ENCODE measurements at regions of chr11 and their contacts with region 1.

Region 1: GRCh38 chr11:110429731-110430266 is at the start of gene FDX1:
- DNase-seq: peak; percentile 91
- ATAC-seq: peak; percentile 87
- H3K4me3 ChIP-seq: peak within 1 kb of the TSS; percentile 74 to 91 (median 80)
- H3K4me3 Mint-ChIP-seq: peak within 1 kb of the TSS; percentile 98
- H3K27ac ChIP-seq: peak within 1 kb of the TSS; percentile 63 to 81
- H3K27ac Mint-ChIP-seq: peak within 1 kb of the TSS; percentile 95
- H3K4me1 ChIP-seq: peaks cover 22 to 28% of the 10 kb centered on the region in 2 donors
- H3K4me1 Mint-ChIP-seq: peaks cover 36% of the 10 kb centered on the region
- H3K27me3 ChIP-seq: no peaks in the 10 kb centered on the region
- H3K27me3 Mint-ChIP-seq: no peaks in the 10 kb centered on the region
- CTCF ChIP-seq: peak; percentile 71
- total RNA-seq, gene FDX1: 10.0 and 11.2 TPM in 2 replicates

Region 2: GRCh38 chr11:110296226-110297075 is 133.3 kb before region 1 on chr11 and contains the start of gene RDX:
- CTCF ChIA-PET with region 1: interaction called, 5 read pairs
- POLR2A ChIA-PET with region 1: no interaction called
- intact Hi-C with region 1: loop called (anchors 1 kb)
- DNase-seq: peak; percentile 83
- ATAC-seq: peak; percentile 84
- H3K4me3 ChIP-seq: peak within 1 kb of the TSS; percentile 50 to 93 (median 86)
- H3K4me3 Mint-ChIP-seq: peak within 1 kb of the TSS; percentile 94
- H3K27ac ChIP-seq: peak within 1 kb of the TSS; percentile 18 to 70
- H3K27ac Mint-ChIP-seq: peak within 1 kb of the TSS; percentile 80
- H3K4me1 ChIP-seq: peaks cover 8 to 12% of the 10 kb centered on the region in 2 donors
- H3K4me1 Mint-ChIP-seq: peaks cover 24% of the 10 kb centered on the region
- H3K27me3 ChIP-seq: peaks cover 0 to 3% (median 0%) of the 10 kb centered on the region in 4 experiments
- H3K27me3 Mint-ChIP-seq: no peaks in the 10 kb centered on the region
- CTCF ChIP-seq: no peak
- total RNA-seq, gene RDX: 34.8 and 39.2 TPM in 2 replicates

Region 3: GRCh38 chr11:110417727-110418126 is 12.1 kb before region 1 on chr11:
- CTCF ChIA-PET with region 1: interaction called, 14 read pairs
- POLR2A ChIA-PET with region 1: no interaction called
- intact Hi-C with region 1: no loop called
- DNase-seq: no peak
- ATAC-seq: no peak
- H3K4me3 ChIP-seq: no peak overlapping the region
- H3K4me3 Mint-ChIP-seq: no peak overlapping the region
- H3K27ac ChIP-seq: no peak overlapping the region
- H3K27ac Mint-ChIP-seq: no peak overlapping the region
- H3K4me1 ChIP-seq: no peaks in the 10 kb centered on the region
- H3K4me1 Mint-ChIP-seq: no peaks in the 10 kb centered on the region
- H3K27me3 ChIP-seq: peaks cover 0 to 6% (median 0%) of the 10 kb centered on the region in 4 experiments
- H3K27me3 Mint-ChIP-seq: peaks cover 9% of the 10 kb centered on the region
- CTCF ChIP-seq: no peak

Region 4: DNA sequence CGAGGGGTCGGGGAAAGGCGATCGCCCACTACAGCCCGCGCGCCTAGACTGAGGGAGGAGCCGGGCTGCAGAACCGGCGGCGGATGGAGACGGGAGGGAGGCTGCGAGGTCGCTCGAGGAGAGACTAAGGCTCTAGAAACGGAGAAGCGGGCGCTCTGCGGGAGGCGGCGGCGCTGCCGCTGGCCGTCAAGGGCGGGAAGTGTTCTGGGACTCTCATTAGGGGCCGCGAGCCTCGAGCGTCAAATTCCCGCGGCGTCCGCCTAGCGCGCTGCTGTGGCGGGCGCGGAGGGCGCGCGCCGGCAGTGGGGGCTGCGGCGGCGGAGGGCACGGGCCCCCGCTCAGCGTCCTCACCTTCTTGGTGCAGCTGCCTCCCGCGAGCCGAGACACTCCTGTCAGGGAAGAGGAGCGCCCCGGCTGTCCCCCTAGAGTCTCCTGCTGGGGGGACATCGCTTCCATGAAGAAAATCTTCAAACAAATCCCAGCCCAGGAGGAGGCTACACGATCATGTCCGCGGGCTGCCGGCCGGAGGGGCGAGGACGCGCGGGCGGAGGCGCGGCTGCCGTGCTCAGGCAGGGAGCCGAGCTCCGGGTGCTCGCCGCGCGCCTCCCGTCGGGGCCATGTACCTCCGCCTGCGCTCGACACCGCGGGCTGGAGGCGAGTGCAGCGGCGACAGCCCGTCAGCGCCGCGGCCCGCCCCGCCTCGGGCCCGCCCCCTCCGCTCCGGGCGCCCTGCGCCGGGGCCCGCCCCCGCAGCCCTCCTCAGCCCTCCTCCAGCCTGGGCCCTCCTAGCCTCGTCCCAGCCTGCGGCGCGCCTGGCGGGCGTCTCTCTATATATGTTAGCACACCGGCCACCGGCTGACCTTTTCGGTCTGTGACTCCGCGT is 282.2 kb after region 1 on chr11 and contains the start of gene ARHGAP20:
- CTCF ChIA-PET with region 1: no interaction called
- POLR2A ChIA-PET with region 1: no interaction called
- intact Hi-C with region 1: loop called (anchors 5 kb)
- DNase-seq: peak; percentile 79
- ATAC-seq: peak; percentile 93
- H3K4me3 ChIP-seq: peak within 1 kb of the TSS; percentile 26 to 86 (median 74)
- H3K4me3 Mint-ChIP-seq: peak within 1 kb of the TSS; percentile 89
- H3K27ac ChIP-seq: peak within 1 kb of the TSS in 1 of 2 donors; percentile 13
- H3K27ac Mint-ChIP-seq: peak within 1 kb of the TSS; percentile 54
- H3K4me1 ChIP-seq: peaks cover 17 to 23% of the 10 kb centered on the region in 2 donors
- H3K4me1 Mint-ChIP-seq: peaks cover 17% of the 10 kb centered on the region
- H3K27me3 ChIP-seq: peaks cover 0 to 41% (median 23%) of the 10 kb centered on the region in 4 experiments
- H3K27me3 Mint-ChIP-seq: peaks cover 47% of the 10 kb centered on the region
- CTCF ChIP-seq: no peak
- total RNA-seq, gene ARHGAP20: 0.58 and 0.91 TPM in 2 replicates

Region 5: DNA sequence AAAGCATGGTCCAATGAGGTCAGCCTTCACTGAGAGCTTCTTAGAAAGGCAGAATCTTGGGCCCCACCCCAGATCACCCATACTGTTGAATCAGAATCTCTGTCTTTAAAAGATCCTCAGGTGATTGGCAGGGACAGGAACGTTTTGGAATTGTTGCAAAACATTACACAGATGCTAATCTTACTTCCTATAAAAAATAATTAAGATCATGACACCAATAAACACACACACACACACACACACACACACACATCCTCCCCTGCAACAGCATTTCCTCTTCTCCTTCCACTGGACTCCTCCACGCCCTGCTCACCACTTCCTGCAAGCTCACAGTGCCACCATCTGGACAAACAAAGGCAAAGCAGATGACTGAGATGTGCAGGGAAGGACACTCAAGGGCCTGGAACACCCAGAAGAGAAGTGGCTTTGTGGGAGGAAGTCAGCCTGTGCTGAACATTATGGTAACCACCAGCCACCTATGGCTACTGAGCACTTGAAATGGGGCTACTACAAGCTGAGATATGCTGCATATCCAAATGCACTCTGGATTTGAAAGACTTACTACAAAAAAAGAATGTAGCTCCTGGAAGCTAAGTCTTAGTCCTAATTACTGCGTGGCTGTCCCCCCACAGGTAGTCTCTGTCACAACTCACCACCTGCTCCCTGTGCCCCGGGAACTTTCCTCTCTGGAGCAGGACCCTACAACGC is 1016.8 kb after region 1 on chr11:
- CTCF ChIA-PET with region 1: interaction called, 13 read pairs
- POLR2A ChIA-PET with region 1: no interaction called
- intact Hi-C with region 1: loop called (anchors 2 kb)
- DNase-seq: peak; percentile 94
- ATAC-seq: peak; percentile 98
- H3K4me3 ChIP-seq: no peak overlapping the region
- H3K4me3 Mint-ChIP-seq: peak overlapping the region; percentile 1
- H3K27ac ChIP-seq: no peak overlapping the region
- H3K27ac Mint-ChIP-seq: peak overlapping the region; percentile 28
- H3K4me1 ChIP-seq: peaks cover 31 to 35% of the 10 kb centered on the region in 2 donors
- H3K4me1 Mint-ChIP-seq: peaks cover 37% of the 10 kb centered on the region
- H3K27me3 ChIP-seq: no peaks in the 10 kb centered on the region
- H3K27me3 Mint-ChIP-seq: peaks cover under 1% of the 10 kb centered on the region
- CTCF ChIP-seq: peak; percentile 74

Measured in B cell (primary cell).